ENCODE measurements at regions of chr6 and their contacts with region 1.

Region 1: GRCh38 chr6:90263633-90264032 is 33.0 kb downstream of the BACH2 start:
- DNase-seq: no peak
- ATAC-seq: no peak
- H3K4me3 ChIP-seq: no peak overlapping the region
- H3K4me3 Mint-ChIP-seq: peak overlapping the region in 4 of 10 donors; percentile 44 to 82 (median 68)
- H3K27ac ChIP-seq: peak overlapping the region; percentile 52
- H3K27ac Mint-ChIP-seq: peak overlapping the region in 8 of 9 donors; percentile 70 to 98 (median 96)
- H3K4me1 ChIP-seq: peaks cover 0 to 91% of the 10 kb centered on the region in 2 donors
- H3K4me1 Mint-ChIP-seq: peaks cover 48 to 100% (median 97%) of the 10 kb centered on the region in 7 donors
- H3K27me3 ChIP-seq: no peaks in the 10 kb centered on the region
- H3K27me3 Mint-ChIP-seq: no peaks in the 10 kb centered on the region

Region 2: DNA sequence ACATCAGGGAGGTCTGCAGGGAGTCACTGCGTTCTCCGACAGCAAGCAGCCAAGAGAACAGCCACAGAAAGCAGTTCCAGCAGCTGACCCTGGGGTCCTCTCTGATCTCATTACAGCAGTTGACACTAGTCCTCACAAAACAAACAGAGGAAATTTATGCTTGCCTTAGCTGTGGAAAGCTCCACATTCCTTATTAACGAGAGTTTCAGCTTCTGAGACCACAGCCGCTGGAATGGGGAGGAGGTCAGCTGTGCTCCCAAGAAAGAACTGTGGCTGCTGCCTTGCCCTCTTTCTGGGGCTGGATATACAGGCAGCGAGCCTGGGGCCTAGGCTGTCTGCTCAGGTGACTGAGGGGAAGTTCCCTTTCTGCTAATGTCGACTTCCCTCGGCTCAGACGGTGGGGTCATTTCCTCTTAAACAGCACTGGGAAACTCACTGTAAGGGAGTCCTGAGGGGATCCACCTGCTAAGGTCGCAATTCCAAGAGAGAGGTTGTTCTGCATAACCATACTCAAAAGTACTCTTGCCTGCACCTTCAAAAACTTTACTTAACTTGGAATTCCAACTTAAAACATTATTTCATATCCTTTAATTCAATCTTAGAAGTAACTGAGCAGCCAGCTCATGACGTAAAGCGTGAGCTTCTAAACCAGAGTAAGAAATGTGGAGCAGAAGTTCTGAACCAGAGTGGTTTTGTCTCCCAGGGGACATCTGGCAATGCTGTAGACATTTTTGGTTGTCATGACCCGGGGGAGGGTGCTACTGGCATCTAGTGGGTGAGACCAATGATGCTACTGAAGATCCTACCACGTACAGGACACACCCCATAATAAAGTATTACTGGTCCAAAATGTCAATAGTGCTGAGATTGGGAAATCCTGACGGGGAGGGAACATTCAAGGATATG is 47.3 kb before region 1 on chr6:
- CTCF ChIA-PET with region 1: interaction called, 3 read pairs
- POLR2A ChIA-PET with region 1: interaction called, 10 read pairs
- intact Hi-C with region 1: no loop called
- DNase-seq: peak in 5 of 9 donors; percentile 61 to 82 (median 63)
- ATAC-seq: peak; percentile 69
- H3K4me3 ChIP-seq: peak overlapping the region; percentile 18
- H3K4me3 Mint-ChIP-seq: peak overlapping the region in 7 of 10 donors; percentile 42 to 74 (median 68)
- H3K27ac ChIP-seq: peak overlapping the region; percentile 85
- H3K27ac Mint-ChIP-seq: no peak overlapping the region
- H3K4me1 ChIP-seq: peaks cover 0 to 97% of the 10 kb centered on the region in 2 donors
- H3K4me1 Mint-ChIP-seq: peaks cover 0 to 33% (median 31%) of the 10 kb centered on the region in 7 donors
- H3K27me3 ChIP-seq: no peaks in the 10 kb centered on the region
- H3K27me3 Mint-ChIP-seq: no peaks in the 10 kb centered on the region

Region 3: DNA sequence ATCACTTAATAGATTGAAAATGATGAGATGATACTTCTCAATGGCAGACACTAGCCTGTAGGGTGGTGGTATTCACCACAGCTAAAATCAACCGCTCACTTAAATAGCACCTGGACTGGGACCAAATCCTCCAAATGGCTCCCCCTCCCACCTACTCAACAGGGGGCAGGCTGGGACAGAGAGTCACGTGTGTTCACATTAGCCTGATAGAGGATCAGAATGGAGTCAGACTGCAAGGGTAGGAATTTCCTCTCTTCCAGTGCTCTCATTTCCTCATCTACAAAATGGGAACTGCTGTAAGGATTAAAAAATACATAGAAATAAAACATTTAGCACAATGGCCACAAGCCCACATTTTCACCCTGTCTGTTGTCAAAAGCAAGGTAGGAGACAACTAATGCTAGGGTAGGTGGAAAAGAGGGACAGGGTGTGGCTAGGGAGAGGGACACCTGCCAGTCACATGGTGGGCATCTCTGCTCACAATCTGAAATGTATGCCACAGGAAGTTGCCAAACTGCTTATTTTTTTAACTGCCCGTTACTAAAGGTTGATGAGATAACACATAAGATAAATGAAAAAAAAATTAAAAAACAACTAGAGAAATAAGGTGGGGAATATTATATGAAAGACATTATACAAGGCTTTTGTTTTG is 22.3 kb before region 1 on chr6:
- CTCF ChIA-PET with region 1: interaction called, 4 read pairs
- POLR2A ChIA-PET with region 1: interaction called, 10 read pairs
- intact Hi-C with region 1: no loop called
- DNase-seq: no peak
- ATAC-seq: peak; percentile 18
- H3K4me3 ChIP-seq: no peak overlapping the region
- H3K4me3 Mint-ChIP-seq: peak overlapping the region in 7 of 10 donors; percentile 12 to 56 (median 33)
- H3K27ac ChIP-seq: peak overlapping the region; percentile 25
- H3K27ac Mint-ChIP-seq: peak overlapping the region in 8 of 9 donors; percentile 65 to 94 (median 84)
- H3K4me1 ChIP-seq: peaks cover 0 to 44% of the 10 kb centered on the region in 2 donors
- H3K4me1 Mint-ChIP-seq: peaks cover 30 to 89% (median 76%) of the 10 kb centered on the region in 7 donors
- H3K27me3 ChIP-seq: no peaks in the 10 kb centered on the region
- H3K27me3 Mint-ChIP-seq: no peaks in the 10 kb centered on the region

Region 4: GRCh38 chr6:90251295-90251992 is 12.2 kb before region 1 on chr6:
- CTCF ChIA-PET with region 1: interaction called, 4 read pairs
- POLR2A ChIA-PET with region 1: interaction called, 7 read pairs
- intact Hi-C with region 1: loop called (anchors 1 kb)
- DNase-seq: no peak
- ATAC-seq: no peak
- H3K4me3 ChIP-seq: no peak overlapping the region
- H3K4me3 Mint-ChIP-seq: peak overlapping the region in 8 of 10 donors; percentile 7 to 71 (median 48)
- H3K27ac ChIP-seq: peak overlapping the region; percentile 53
- H3K27ac Mint-ChIP-seq: peak overlapping the region; percentile 49 to 98 (median 85)
- H3K4me1 ChIP-seq: peaks cover 0 to 55% of the 10 kb centered on the region in 2 donors
- H3K4me1 Mint-ChIP-seq: peaks cover 37 to 99% (median 90%) of the 10 kb centered on the region in 7 donors
- H3K27me3 ChIP-seq: no peaks in the 10 kb centered on the region
- H3K27me3 Mint-ChIP-seq: no peaks in the 10 kb centered on the region

Region 5: GRCh38 chr6:90343581-90343980 is 79.9 kb after region 1 on chr6:
- CTCF ChIA-PET with region 1: no interaction called
- POLR2A ChIA-PET with region 1: no interaction called
- intact Hi-C with region 1: no loop called
- DNase-seq: no peak
- ATAC-seq: no peak
- H3K4me3 ChIP-seq: no peak overlapping the region
- H3K4me3 Mint-ChIP-seq: no peak overlapping the region
- H3K27ac ChIP-seq: no peak overlapping the region
- H3K27ac Mint-ChIP-seq: no peak overlapping the region
- H3K4me1 ChIP-seq: no peaks in the 10 kb centered on the region
- H3K4me1 Mint-ChIP-seq: peaks cover 0 to 3% (median 0%) of the 10 kb centered on the region in 7 donors
- H3K27me3 ChIP-seq: no peaks in the 10 kb centered on the region
- H3K27me3 Mint-ChIP-seq: peaks cover 0 to 25% (median 0%) of the 10 kb centered on the region in 5 donors